Stomach (tissue), 19 donors: ENCODE measurements at regions of chr16 and their contacts with region 1.

Region 1: DNA sequence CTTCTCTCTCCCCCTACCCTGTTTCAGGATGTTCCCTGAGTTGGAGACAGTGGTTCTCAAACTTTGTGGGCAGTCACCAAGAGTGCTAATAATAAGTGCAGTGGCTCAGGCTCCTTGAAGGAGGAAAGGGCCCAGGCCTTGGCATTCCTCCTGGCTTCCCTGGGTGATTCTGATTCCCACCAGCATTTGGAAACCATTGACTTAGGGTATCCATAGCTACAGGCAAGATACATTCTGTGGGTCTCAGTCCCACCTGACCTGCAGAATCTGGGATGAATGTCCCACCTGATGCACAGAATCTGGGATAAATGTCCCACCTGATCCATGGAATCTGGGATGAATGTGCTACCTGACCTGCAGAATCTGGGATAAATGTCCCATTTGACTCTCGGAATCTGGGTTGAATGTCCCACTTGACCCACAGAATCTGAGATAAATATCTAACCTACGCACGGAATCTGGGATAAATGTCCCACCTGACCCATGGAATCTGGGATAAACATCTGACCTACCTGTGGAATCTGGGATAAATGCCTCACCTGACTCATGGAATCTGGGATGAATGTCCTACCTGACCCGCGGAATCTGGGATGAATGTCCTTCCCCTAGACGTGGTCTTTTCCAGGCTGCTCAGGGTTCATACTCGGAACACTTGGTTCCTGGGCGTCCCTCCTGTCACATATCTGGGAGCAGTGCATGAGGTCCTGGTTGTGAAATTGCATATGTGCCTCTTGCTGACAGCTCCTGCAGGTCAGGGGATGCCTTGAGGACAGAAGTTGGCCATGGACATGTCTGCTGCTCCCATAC is 136.7 kb upstream of the HS3ST2 start:
- DNase-seq: no peak
- H3K4me3 ChIP-seq: no peak overlapping the region
- H3K27ac ChIP-seq: no peak overlapping the region
- H3K4me1 ChIP-seq: no peaks in the 10 kb centered on the region
- H3K27me3 ChIP-seq: peaks cover 0 to 72% (median 27%) of the 10 kb centered on the region in 3 donors
- CTCF ChIP-seq: no peak
- EP300 ChIP-seq: no peak
- POLR2A ChIP-seq: no peak

Region 2: GRCh38 chr16:21574381-21574780 is 1102.8 kb before region 1 on chr16:
- intact Hi-C with region 1: loop called (anchors 5 kb)
- DNase-seq: peak in 1 of 2 donors; percentile 19
- H3K4me3 ChIP-seq: no peak overlapping the region
- H3K27ac ChIP-seq: no peak overlapping the region
- H3K4me1 ChIP-seq: no peaks in the 10 kb centered on the region
- H3K27me3 ChIP-seq: peaks cover 0 to 16% (median 0%) of the 10 kb centered on the region in 3 donors
- CTCF ChIP-seq: no peak
- EP300 ChIP-seq: no peak
- POLR2A ChIP-seq: no peak

Region 3: DNA sequence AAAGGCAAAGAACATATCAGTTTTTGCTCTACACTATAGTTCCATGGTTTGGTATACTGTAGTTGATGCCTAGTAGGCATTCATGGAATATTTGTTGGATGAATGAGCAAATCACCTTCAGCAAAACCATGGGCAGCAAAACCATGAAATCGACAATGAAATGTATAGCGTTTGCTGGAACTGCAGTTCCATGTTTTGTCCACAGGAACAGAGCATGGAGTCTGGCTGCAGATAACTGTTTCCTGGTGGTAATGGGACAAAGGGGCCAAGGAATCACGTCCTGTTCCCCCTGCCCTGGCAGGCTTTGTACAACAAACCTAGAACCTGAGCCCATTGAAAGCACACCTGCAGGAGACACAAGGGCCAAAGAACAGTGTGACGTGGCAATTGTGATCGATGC is 370.9 kb after region 1 on chr16:
- intact Hi-C with region 1: no loop called
- DNase-seq: no peak
- H3K4me3 ChIP-seq: no peak overlapping the region
- H3K27ac ChIP-seq: no peak overlapping the region
- H3K4me1 ChIP-seq: no peaks in the 10 kb centered on the region
- H3K27me3 ChIP-seq: peaks cover 0 to 72% (median 27%) of the 10 kb centered on the region in 3 donors
- CTCF ChIP-seq: no peak
- EP300 ChIP-seq: no peak
- POLR2A ChIP-seq: no peak